Panc1 (cell line): ENCODE measurements at regions of chr10 and their contacts with region 1.

Region 1: GRCh38 chr10:124074501-124075109 is 18.8 kb downstream of the CHST15 start:
- DNase-seq: no peak
- ATAC-seq: no peak
- H3K4me3 ChIP-seq: no peak overlapping the region
- H3K27ac ChIP-seq: no peak overlapping the region
- H3K4me1 ChIP-seq: 0 out of 2 replicates have a peak, but pooled peaks cover 4% of the 10 kb centered on the region
- H3K27me3 ChIP-seq: no peaks in the 10 kb centered on the region
- CTCF ChIP-seq: no peak

Region 2: DNA sequence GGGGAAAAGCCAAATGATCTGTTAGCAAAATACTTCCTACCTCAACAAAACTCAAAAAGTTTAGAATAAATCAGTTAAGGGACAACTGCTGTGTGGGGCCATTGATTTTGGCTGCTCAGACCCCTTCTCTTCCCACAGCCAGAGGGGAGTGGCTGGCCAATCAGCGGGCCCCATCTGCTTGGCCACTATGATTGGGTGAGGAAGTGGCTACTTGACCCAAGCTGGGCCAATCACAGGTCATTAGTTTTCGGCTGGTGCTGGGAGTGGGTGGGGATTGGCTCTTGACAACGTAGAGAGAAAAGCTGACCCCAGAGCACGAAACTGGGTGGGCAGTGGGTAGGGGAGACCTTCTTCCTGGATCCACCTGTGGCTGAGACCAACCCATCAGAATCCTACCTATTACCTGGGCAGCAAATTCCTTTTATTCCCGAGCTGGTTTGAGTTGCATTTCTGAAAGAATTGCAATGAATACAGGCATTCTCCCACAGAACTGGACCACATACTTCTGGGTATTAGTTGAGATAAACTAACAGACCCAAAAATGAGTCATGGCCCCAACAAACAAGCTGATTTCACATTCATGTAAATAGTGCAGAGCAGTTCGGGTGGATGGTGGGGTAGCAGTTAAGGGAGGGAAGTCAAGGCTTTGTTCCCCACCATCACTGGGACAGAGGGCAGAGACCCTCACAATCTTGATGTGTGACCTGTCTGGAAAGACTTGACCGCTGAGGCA is 974.4 kb before region 1 on chr10:
- CTCF ChIA-PET with region 1: no interaction called
- POLR2A ChIA-PET with region 1: interaction called, 13 read pairs
- in situ Hi-C with region 1: no loop called
- intact Hi-C with region 1: no loop called
- DNase-seq: no peak
- ATAC-seq: peak; percentile 52
- H3K4me3 ChIP-seq: no peak overlapping the region
- H3K27ac ChIP-seq: no peak overlapping the region
- H3K4me1 ChIP-seq: no peaks in the 10 kb centered on the region; the same call in 1 of the 2 replicates
- H3K27me3 ChIP-seq: no peaks in the 10 kb centered on the region
- CTCF ChIP-seq: no peak

Region 3: GRCh38 chr10:123427392-123427791 is 647.2 kb before region 1 on chr10:
- CTCF ChIA-PET with region 1: no interaction called
- POLR2A ChIA-PET with region 1: no interaction called
- in situ Hi-C with region 1: no loop called
- intact Hi-C with region 1: no loop called
- DNase-seq: no peak
- ATAC-seq: no peak
- H3K4me3 ChIP-seq: no peak overlapping the region
- H3K27ac ChIP-seq: no peak overlapping the region
- H3K4me1 ChIP-seq: no peaks in the 10 kb centered on the region
- H3K27me3 ChIP-seq: peaks cover 54% of the 10 kb centered on the region
- CTCF ChIP-seq: no peak

Region 4: GRCh38 chr10:124053971-124054370 is 20.6 kb before region 1 on chr10:
- CTCF ChIA-PET with region 1: no interaction called
- POLR2A ChIA-PET with region 1: no interaction called
- in situ Hi-C with region 1: no loop called
- intact Hi-C with region 1: no loop called
- DNase-seq: no peak
- ATAC-seq: no peak
- H3K4me3 ChIP-seq: no peak overlapping the region
- H3K27ac ChIP-seq: no peak overlapping the region
- H3K4me1 ChIP-seq: no peaks in the 10 kb centered on the region
- H3K27me3 ChIP-seq: no peaks in the 10 kb centered on the region
- CTCF ChIP-seq: no peak

Region 5: DNA sequence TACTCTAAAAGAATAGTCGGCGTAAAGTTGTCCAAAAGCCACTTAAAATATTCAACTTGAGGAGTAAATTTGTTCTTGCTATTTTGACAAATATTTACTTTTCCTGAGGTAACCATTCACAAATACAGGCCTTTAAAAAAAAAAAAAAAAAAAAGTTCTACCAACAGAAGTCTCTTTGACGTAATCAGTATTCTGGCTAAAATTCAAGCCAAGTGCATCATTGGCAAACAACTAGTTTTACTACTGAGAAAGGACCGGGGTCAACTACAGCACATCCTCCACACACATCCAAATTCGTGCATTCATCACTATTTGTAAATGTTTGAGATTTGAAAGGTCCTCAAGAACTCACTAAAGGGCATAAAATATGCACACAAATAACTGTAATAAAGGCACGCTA is 342.1 kb after region 1 on chr10:
- CTCF ChIA-PET with region 1: no interaction called
- POLR2A ChIA-PET with region 1: interaction called, 14 read pairs
- in situ Hi-C with region 1: no loop called
- intact Hi-C with region 1: no loop called
- DNase-seq: no peak
- ATAC-seq: no peak
- H3K4me3 ChIP-seq: no peak overlapping the region; a peak in 1 of 4 replicates
- H3K27ac ChIP-seq: no peak overlapping the region
- H3K4me1 ChIP-seq: peaks cover 23% of the 10 kb centered on the region
- H3K27me3 ChIP-seq: no peaks in the 10 kb centered on the region
- CTCF ChIP-seq: no peak